ENCODE measurements at regions of chr2 and their contacts with region 1.

Region 1: GRCh38 chr2:136178941-136179601 is 61.1 kb upstream of the CXCR4 start:
- DNase-seq: no peak
- H3K4me3 ChIP-seq: no peak overlapping the region
- H3K27ac ChIP-seq: no peak overlapping the region
- H3K4me1 ChIP-seq: no peaks in the 10 kb centered on the region
- CTCF ChIP-seq: no peak

Region 2: DNA sequence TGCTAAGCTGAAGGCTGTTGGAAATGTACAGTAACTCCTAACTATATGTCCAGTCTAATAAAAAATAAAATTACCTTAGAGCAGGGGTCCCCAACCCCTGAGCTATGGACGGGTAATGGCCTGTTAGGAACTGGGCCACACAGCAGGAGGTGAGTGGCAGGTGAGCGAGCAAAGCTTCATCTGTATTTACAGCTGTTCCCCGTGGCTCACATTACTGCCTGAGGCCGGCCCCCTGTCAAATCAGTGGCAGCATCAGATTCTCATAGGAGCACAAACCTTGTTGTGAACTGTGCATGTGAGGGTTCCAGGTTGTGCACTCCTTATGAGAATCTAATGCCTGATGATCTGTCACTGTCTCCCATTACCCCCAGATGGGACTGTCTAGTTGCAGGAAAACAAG is 12.0 kb after region 1 on chr2:
- CTCF ChIA-PET with region 1: no interaction called
- POLR2A ChIA-PET with region 1: interaction called, 15 read pairs
- intact Hi-C with region 1: no loop called
- DNase-seq: no peak
- H3K4me3 ChIP-seq: no peak overlapping the region
- H3K27ac ChIP-seq: no peak overlapping the region
- H3K4me1 ChIP-seq: peaks cover 22% of the 10 kb centered on the region
- CTCF ChIP-seq: no peak

Measured in OCI-LY7 (cell line).